ENCODE measurements at regions of chr6 and their contacts with region 1.

Region 1: DNA sequence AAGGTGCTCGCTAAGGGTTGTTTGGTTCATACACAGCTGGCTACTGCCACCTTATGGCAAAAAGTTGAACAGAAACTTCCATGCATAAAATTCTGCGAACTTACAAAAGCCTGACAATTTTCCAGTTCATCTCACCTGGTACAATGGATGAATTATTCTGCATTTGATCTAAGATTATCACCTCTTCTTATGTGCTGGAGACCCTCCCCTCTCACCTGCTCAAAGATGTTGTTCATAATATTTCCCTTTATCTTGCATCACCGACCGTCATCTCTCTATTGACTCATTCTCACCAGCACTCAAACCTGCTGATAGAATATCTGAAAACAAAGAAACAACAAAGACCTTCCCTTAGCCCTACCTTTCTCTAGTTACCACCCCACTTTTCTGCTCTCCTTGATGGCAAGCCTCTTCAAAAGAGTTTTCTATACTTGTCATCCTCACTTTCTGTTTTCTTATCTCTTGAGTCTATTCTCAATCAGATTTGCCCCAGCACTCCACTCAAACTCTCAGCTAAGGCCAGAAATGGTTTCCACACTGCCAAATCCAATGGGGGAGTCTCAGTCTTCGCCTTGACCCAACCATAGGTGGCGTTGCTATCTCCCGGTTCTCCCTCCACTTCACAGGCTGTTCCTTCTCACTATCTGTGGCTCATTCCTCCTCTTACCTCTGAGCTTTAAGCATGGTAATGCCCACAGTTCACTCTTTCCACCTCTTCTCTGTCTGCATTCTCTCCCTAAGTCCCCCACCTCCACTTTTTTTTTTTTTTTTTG is 25.8 kb downstream of the SNRNP48 start:
- DNase-seq: peak in 1 of 10 donors; percentile 11
- H3K4me3 ChIP-seq: peak overlapping the region in 34 of 59 donors; percentile 4 to 54 (median 32)
- H3K27ac ChIP-seq: no peak overlapping the region
- H3K27me3 ChIP-seq: no peaks in the 10 kb centered on the region
- CTCF ChIP-seq: peak; percentile 53 to 88 (median 74)

Region 2: GRCh38 chr6:6686748-6687601 is 928.8 kb before region 1 on chr6:
- intact Hi-C with region 1: loop called in 1 of 2 experiments (anchors 10 kb)
- DNase-seq: peak in 2 of 10 donors; percentile 53 to 80
- H3K4me3 ChIP-seq: peak overlapping the region in 4 of 59 donors; percentile 13 to 26 (median 21)
- H3K27ac ChIP-seq: peak overlapping the region in 3 of 59 donors; percentile 4 to 65 (median 51)
- H3K27me3 ChIP-seq: peaks cover 0 to 7% (median 0%) of the 10 kb centered on the region in 45 donors
- CTCF ChIP-seq: no peak

Region 3: GRCh38 chr6:7276199-7276524 is 339.6 kb before region 1 on chr6:
- intact Hi-C with region 1: loop called (anchors 2 to 5 kb)
- DNase-seq: no peak
- H3K4me3 ChIP-seq: no peak overlapping the region
- H3K27ac ChIP-seq: no peak overlapping the region
- H3K27me3 ChIP-seq: no peaks in the 10 kb centered on the region
- CTCF ChIP-seq: peak in 8 of 56 donors; percentile 2 to 38 (median 8)

Region 4: GRCh38 chr6:7649037-7649810 is 33.4 kb after region 1 on chr6:
- intact Hi-C with region 1: no loop called
- DNase-seq: no peak
- H3K4me3 ChIP-seq: no peak overlapping the region
- H3K27ac ChIP-seq: no peak overlapping the region
- H3K27me3 ChIP-seq: peaks cover 0 to 9% (median 0%) of the 10 kb centered on the region in 45 donors
- CTCF ChIP-seq: no peak

Measured in dorsolateral prefrontal cortex (tissue), 120 donors.